HCT116 (cell line): ENCODE measurements at regions of chr10 and their contacts with region 1.

Region 1: GRCh38 chr10:110610308-110610774 is 33.8 kb upstream of the RBM20 start:
- DNase-seq: peak; percentile 49
- ATAC-seq: peak; percentile 80
- H3K4me3 ChIP-seq: no peak overlapping the region
- H3K27ac ChIP-seq: no peak overlapping the region
- H3K4me1 ChIP-seq: peaks cover 0 to 9% of the 10 kb centered on the region in 2 experiments; a peak in 1 of 4 replicates
- H3K27me3 ChIP-seq: 0 out of 2 replicates have a peak, but pooled peaks cover 4% of the 10 kb centered on the region
- CTCF ChIP-seq: peak; percentile 94 to 99 (median 95)
- POLR2A ChIP-seq: no peak
- RAD21 ChIP-seq: peak; percentile 99

Region 2: DNA sequence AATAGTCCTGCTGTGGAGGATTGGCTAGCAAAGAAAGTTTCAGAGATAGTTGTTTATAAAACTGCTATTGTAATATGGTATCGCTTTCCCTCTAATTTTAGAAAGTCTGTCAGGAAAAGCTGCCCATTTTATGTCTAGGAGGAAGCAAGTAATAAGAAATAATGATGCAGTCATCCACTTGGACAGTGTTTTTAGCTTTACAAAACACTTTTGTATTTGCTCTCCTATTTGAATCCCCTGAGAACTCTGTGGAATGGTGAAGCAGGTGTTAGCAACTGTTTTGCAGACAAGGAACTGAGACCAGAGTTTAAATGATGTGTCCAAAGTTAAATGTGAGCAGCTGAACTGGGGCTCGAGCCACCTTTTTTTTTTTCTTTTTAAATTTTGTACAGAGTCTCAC is 1142.8 kb before region 1 on chr10:
- CTCF ChIA-PET with region 1: no interaction called
- POLR2A ChIA-PET with region 1: no interaction called
- RAD21 ChIA-PET with region 1: no interaction called
- intact Hi-C with region 1: no loop called
- DNase-seq: no peak
- ATAC-seq: no peak
- H3K4me3 ChIP-seq: no peak overlapping the region
- H3K27ac ChIP-seq: no peak overlapping the region
- H3K4me1 ChIP-seq: no peaks in the 10 kb centered on the region
- H3K27me3 ChIP-seq: no peaks in the 10 kb centered on the region
- CTCF ChIP-seq: no peak
- POLR2A ChIP-seq: no peak
- RAD21 ChIP-seq: no peak

Region 3: GRCh38 chr10:110279407-110279986 is 330.8 kb before region 1 on chr10:
- CTCF ChIA-PET with region 1: no interaction called
- POLR2A ChIA-PET with region 1: no interaction called
- RAD21 ChIA-PET with region 1: no interaction called
- intact Hi-C with region 1: no loop called
- DNase-seq: peak; percentile 54
- ATAC-seq: peak; percentile 86
- H3K4me3 ChIP-seq: no peak overlapping the region
- H3K27ac ChIP-seq: no peak overlapping the region
- H3K4me1 ChIP-seq: peaks cover 0 to 3% of the 10 kb centered on the region in 2 experiments; a peak in 1 of 4 replicates
- H3K27me3 ChIP-seq: no peaks in the 10 kb centered on the region
- CTCF ChIP-seq: peak; percentile 79 to 94 (median 91)
- POLR2A ChIP-seq: no peak
- RAD21 ChIP-seq: peak; percentile 95

Region 4: GRCh38 chr10:110681023-110681681 is 70.8 kb after region 1 on chr10:
- CTCF ChIA-PET with region 1: interaction called, 6 read pairs
- POLR2A ChIA-PET with region 1: no interaction called
- RAD21 ChIA-PET with region 1: interaction called in 1 of 2 experiments, 3 read pairs
- intact Hi-C with region 1: loop called (anchors 1 kb)
- DNase-seq: peak; percentile 22
- ATAC-seq: peak; percentile 95
- H3K4me3 ChIP-seq: no peak overlapping the region
- H3K27ac ChIP-seq: no peak overlapping the region
- H3K4me1 ChIP-seq: no peaks in the 10 kb centered on the region
- H3K27me3 ChIP-seq: no peaks in the 10 kb centered on the region
- CTCF ChIP-seq: peak; percentile 84 to 97 (median 91)
- POLR2A ChIP-seq: no peak
- RAD21 ChIP-seq: peak; percentile 79

Region 5: DNA sequence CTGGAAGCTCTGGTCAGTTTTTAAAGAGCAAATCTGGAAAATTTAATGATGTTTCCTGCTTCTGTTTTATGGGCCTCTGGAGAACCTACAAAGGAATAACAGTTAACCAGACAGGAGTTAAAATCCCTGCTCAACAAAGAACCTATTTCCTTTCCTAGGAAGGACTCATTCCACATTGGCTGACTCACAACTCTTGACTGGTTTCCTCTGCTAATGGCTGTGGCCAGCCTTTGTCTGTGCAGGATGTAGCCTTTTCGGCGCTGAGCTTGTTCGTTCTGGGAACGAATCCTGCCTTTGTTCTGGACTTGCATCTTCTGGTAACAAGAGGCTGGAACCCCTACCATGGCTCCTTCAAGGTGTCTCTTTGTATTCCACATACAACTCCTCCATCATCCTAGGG is 148.6 kb after region 1 on chr10:
- CTCF ChIA-PET with region 1: no interaction called
- POLR2A ChIA-PET with region 1: no interaction called
- RAD21 ChIA-PET with region 1: no interaction called
- intact Hi-C with region 1: no loop called
- DNase-seq: no peak
- ATAC-seq: no peak
- H3K4me3 ChIP-seq: no peak overlapping the region
- H3K27ac ChIP-seq: no peak overlapping the region
- H3K4me1 ChIP-seq: peaks cover 0 to 4% of the 10 kb centered on the region in 2 experiments; a peak in 1 of 4 replicates
- H3K27me3 ChIP-seq: peaks cover 8% of the 10 kb centered on the region; the same call in 1 of the 2 replicates
- CTCF ChIP-seq: no peak
- POLR2A ChIP-seq: no peak
- RAD21 ChIP-seq: no peak

Region 6: DNA sequence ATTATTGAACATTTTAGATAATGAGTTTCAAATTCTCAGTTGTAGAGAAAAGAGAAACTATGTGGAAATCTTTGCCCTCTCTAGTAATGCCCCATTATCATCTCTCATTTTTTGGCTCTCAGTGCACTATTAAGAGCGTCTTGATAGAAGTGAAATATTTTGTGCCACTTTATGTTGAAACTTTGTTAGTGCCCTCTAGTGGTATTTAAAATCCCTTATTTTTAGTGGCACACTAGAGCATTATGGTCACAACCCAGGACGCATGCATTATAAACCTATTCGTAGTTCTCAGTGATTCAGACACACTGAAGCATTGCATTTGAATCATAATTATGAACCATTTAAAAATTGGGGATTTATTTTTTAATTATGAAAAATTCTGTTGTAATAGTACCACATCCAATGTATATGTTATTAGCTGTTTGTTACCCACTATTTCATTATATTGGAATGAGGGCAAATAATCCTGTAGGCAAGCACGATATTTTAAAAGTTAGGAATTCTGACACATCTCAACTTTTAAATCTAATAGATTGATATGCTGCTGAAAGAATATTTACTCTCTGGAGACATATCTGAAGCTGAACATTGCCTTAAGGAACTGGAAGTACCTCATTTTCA is 283.3 kb after region 1 on chr10:
- CTCF ChIA-PET with region 1: interaction called, 3 read pairs
- POLR2A ChIA-PET with region 1: no interaction called
- RAD21 ChIA-PET with region 1: interaction called in 1 of 2 experiments, 3 read pairs
- intact Hi-C with region 1: loop called (anchors 2 kb)
- DNase-seq: peak; percentile 45
- ATAC-seq: peak; percentile 94
- H3K4me3 ChIP-seq: no peak overlapping the region
- H3K27ac ChIP-seq: no peak overlapping the region
- H3K4me1 ChIP-seq: no peaks in the 10 kb centered on the region
- H3K27me3 ChIP-seq: no peaks in the 10 kb centered on the region
- CTCF ChIP-seq: peak; percentile 56 to 78 (median 73)
- POLR2A ChIP-seq: no peak
- RAD21 ChIP-seq: peak; percentile 77

Region 7: GRCh38 chr10:111360260-111360925 is 750.1 kb after region 1 on chr10:
- CTCF ChIA-PET with region 1: no interaction called
- POLR2A ChIA-PET with region 1: no interaction called
- RAD21 ChIA-PET with region 1: no interaction called
- intact Hi-C with region 1: loop called (anchors 5 kb)
- DNase-seq: peak; percentile 64
- ATAC-seq: peak; percentile 99
- H3K4me3 ChIP-seq: no peak overlapping the region
- H3K27ac ChIP-seq: no peak overlapping the region
- H3K4me1 ChIP-seq: no peaks in the 10 kb centered on the region
- H3K27me3 ChIP-seq: peaks cover 49% of the 10 kb centered on the region
- CTCF ChIP-seq: peak; percentile 73 to 96 (median 78)
- POLR2A ChIP-seq: no peak
- RAD21 ChIP-seq: peak; percentile 93